ENCODE measurements at regions of chr7 and their contacts with region 1.

Region 1: DNA sequence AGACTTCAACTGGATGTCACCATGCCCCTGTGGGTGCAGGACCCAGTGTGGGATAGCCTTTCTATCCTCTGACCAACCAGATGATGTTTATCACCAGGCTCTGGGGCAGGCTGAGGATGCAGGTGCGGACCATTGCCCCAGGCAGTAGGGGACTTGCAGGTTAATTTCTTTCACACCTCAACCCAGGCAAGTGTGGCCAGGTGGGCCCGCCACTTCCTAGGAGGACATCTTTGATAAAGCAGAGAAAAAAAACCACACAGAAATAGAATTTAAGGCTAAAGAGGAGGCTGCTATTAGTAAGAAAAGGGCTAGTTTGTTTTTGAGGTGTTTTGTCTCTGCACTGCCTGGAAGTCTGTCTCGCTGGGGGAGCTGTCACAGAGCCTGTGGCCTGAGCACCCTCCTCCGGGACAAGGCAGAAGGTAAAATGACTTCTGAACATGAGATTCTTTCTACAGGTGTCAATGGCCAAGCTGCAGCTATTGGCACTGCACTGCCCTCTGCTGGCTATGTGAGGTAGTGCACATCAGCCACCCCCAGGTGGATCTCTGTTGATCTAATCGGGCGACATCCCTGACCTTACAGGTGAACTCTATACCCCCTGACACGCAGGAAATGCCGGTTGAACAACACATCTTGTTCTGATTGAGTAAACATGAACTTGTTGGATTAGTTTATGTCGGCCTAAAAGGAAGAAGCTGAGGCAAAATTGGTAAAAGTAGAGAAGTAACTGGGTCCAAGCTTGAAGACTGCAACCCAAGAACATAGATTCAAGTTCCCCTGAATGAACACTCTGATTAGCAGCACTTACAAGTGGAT is 21.0 kb downstream of the UPP1 start:
- DNase-seq: peak; percentile 81 to 97 (median 89)
- ATAC-seq: peak; percentile 98
- H3K4me3 ChIP-seq: no peak overlapping the region
- H3K4me3 Mint-ChIP-seq: no peak overlapping the region
- H3K27ac ChIP-seq: peak overlapping the region in 1 of 2 experiments; percentile 24
- H3K27ac Mint-ChIP-seq: peak overlapping the region; percentile 69
- H3K4me1 ChIP-seq: peaks cover 11% of the 10 kb centered on the region
- H3K4me1 Mint-ChIP-seq: peaks cover 11% of the 10 kb centered on the region
- H3K27me3 ChIP-seq: no peaks in the 10 kb centered on the region
- H3K27me3 Mint-ChIP-seq: no peaks in the 10 kb centered on the region
- CTCF ChIP-seq: peak; percentile 98

Region 2: GRCh38 chr7:47937711-47938573 is 172.1 kb before region 1 on chr7:
- CTCF ChIA-PET with region 1: interaction called, 14 read pairs
- POLR2A ChIA-PET with region 1: no interaction called
- intact Hi-C with region 1: no loop called
- DNase-seq: peak in 1 of 9 experiments; percentile 37
- ATAC-seq: no peak
- H3K4me3 ChIP-seq: no peak overlapping the region
- H3K4me3 Mint-ChIP-seq: no peak overlapping the region
- H3K27ac ChIP-seq: no peak overlapping the region
- H3K27ac Mint-ChIP-seq: no peak overlapping the region
- H3K4me1 ChIP-seq: no peaks in the 10 kb centered on the region
- H3K4me1 Mint-ChIP-seq: no peaks in the 10 kb centered on the region
- H3K27me3 ChIP-seq: no peaks in the 10 kb centered on the region
- H3K27me3 Mint-ChIP-seq: no peaks in the 10 kb centered on the region
- CTCF ChIP-seq: no peak

Region 3: GRCh38 chr7:47945261-47946001 is 164.6 kb before region 1 on chr7:
- CTCF ChIA-PET with region 1: interaction called, 111 read pairs
- POLR2A ChIA-PET with region 1: no interaction called
- intact Hi-C with region 1: loop called (anchors 1 kb)
- DNase-seq: peak; percentile 42 to 83 (median 71)
- ATAC-seq: no peak
- H3K4me3 ChIP-seq: no peak overlapping the region
- H3K4me3 Mint-ChIP-seq: no peak overlapping the region
- H3K27ac ChIP-seq: no peak overlapping the region
- H3K27ac Mint-ChIP-seq: no peak overlapping the region
- H3K4me1 ChIP-seq: no peaks in the 10 kb centered on the region
- H3K4me1 Mint-ChIP-seq: no peaks in the 10 kb centered on the region
- H3K27me3 ChIP-seq: no peaks in the 10 kb centered on the region
- H3K27me3 Mint-ChIP-seq: no peaks in the 10 kb centered on the region
- CTCF ChIP-seq: peak; percentile 82

Region 4: GRCh38 chr7:47979145-47979831 is 130.8 kb before region 1 on chr7 and contains the start of gene HUS1:
- CTCF ChIA-PET with region 1: interaction called, 20 read pairs
- POLR2A ChIA-PET with region 1: interaction called, 8 read pairs
- intact Hi-C with region 1: loop called in 1 of 2 experiments (anchors 1 kb)
- DNase-seq: peak; percentile 85 to 95 (median 90)
- ATAC-seq: peak; percentile 98
- H3K4me3 ChIP-seq: peak within 1 kb of the TSS; percentile 83 to 86
- H3K4me3 Mint-ChIP-seq: peak within 1 kb of the TSS; percentile 94
- H3K27ac ChIP-seq: peak within 1 kb of the TSS; percentile 93 to 96
- H3K27ac Mint-ChIP-seq: peak within 1 kb of the TSS; percentile 99
- H3K4me1 ChIP-seq: peaks cover 13% of the 10 kb centered on the region
- H3K4me1 Mint-ChIP-seq: peaks cover 26% of the 10 kb centered on the region
- H3K27me3 ChIP-seq: no peaks in the 10 kb centered on the region
- H3K27me3 Mint-ChIP-seq: no peaks in the 10 kb centered on the region
- CTCF ChIP-seq: no peak
- total RNA-seq, gene HUS1: 73.4 to 82.9 TPM

Region 5: GRCh38 chr7:48035301-48035966 is 74.6 kb before region 1 on chr7 and contains the start of gene C7orf57:
- CTCF ChIA-PET with region 1: interaction called, 15 read pairs
- POLR2A ChIA-PET with region 1: no interaction called
- intact Hi-C with region 1: loop called (anchors 1 to 5 kb)
- DNase-seq: peak; percentile 69 to 91 (median 85)
- ATAC-seq: peak; percentile 86
- H3K4me3 ChIP-seq: peak within 1 kb of the TSS; percentile 57 to 73
- H3K4me3 Mint-ChIP-seq: peak within 1 kb of the TSS; percentile 81
- H3K27ac ChIP-seq: peak within 1 kb of the TSS in 1 of 2 experiments; percentile 37
- H3K27ac Mint-ChIP-seq: no peak within 1 kb of the TSS
- H3K4me1 ChIP-seq: peaks cover 8% of the 10 kb centered on the region
- H3K4me1 Mint-ChIP-seq: peaks cover 10% of the 10 kb centered on the region
- H3K27me3 ChIP-seq: peaks cover 8 to 10% of the 10 kb centered on the region in 2 experiments
- H3K27me3 Mint-ChIP-seq: peaks cover 13% of the 10 kb centered on the region
- CTCF ChIP-seq: no peak
- total RNA-seq, gene C7orf57: not detected

Region 6: GRCh38 chr7:48088559-48089045 is 21.5 kb before region 1 on chr7:
- CTCF ChIA-PET with region 1: interaction called, 17 read pairs
- POLR2A ChIA-PET with region 1: interaction called, 4 read pairs
- intact Hi-C with region 1: loop called in 1 of 2 experiments (anchors 1 kb)
- DNase-seq: no peak
- ATAC-seq: no peak
- H3K4me3 ChIP-seq: peak overlapping the region; percentile 87 to 92
- H3K4me3 Mint-ChIP-seq: peak overlapping the region; percentile 89
- H3K27ac ChIP-seq: peak overlapping the region; percentile 85 to 86
- H3K27ac Mint-ChIP-seq: peak overlapping the region; percentile 94
- H3K4me1 ChIP-seq: peaks cover 71% of the 10 kb centered on the region
- H3K4me1 Mint-ChIP-seq: peaks cover 75% of the 10 kb centered on the region
- H3K27me3 ChIP-seq: no peaks in the 10 kb centered on the region
- H3K27me3 Mint-ChIP-seq: no peaks in the 10 kb centered on the region
- CTCF ChIP-seq: no peak

Region 7: DNA sequence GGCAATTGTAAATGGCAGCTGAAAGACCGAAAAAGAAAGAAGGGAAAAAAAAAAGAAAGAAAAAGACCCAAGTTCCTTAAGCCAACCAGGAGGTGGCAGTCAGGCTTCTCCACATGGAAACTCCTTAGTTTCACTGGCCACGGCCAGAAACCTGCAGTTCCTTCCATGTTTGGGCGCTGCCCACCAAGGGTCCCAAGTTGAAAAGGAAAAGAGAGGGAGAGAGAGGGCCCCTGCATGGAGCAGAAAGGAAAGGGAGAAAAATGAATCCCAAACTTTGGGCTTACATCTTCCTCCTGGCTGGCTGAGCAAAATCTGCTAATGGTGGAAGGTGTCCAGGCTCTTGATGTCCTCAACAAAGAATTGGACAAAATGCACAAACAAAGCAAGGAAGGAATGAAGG is 29.4 kb after region 1 on chr7:
- CTCF ChIA-PET with region 1: no interaction called
- POLR2A ChIA-PET with region 1: no interaction called
- intact Hi-C with region 1: no loop called
- DNase-seq: no peak
- ATAC-seq: no peak
- H3K4me3 ChIP-seq: no peak overlapping the region
- H3K4me3 Mint-ChIP-seq: no peak overlapping the region
- H3K27ac ChIP-seq: no peak overlapping the region
- H3K27ac Mint-ChIP-seq: no peak overlapping the region
- H3K4me1 ChIP-seq: no peaks in the 10 kb centered on the region
- H3K4me1 Mint-ChIP-seq: peaks cover 2% of the 10 kb centered on the region
- H3K27me3 ChIP-seq: no peaks in the 10 kb centered on the region
- H3K27me3 Mint-ChIP-seq: peaks cover 2% of the 10 kb centered on the region
- CTCF ChIP-seq: no peak

Region 8: GRCh38 chr7:48154792-48155413 is 44.8 kb after region 1 on chr7:
- CTCF ChIA-PET with region 1: no interaction called
- POLR2A ChIA-PET with region 1: interaction called, 4 read pairs
- intact Hi-C with region 1: loop called in 1 of 2 experiments (anchors 2 kb)
- DNase-seq: peak in 5 of 9 experiments; percentile 7 to 49 (median 33)
- ATAC-seq: no peak
- H3K4me3 ChIP-seq: no peak overlapping the region
- H3K4me3 Mint-ChIP-seq: no peak overlapping the region
- H3K27ac ChIP-seq: no peak overlapping the region
- H3K27ac Mint-ChIP-seq: no peak overlapping the region
- H3K4me1 ChIP-seq: no peaks in the 10 kb centered on the region
- H3K4me1 Mint-ChIP-seq: no peaks in the 10 kb centered on the region
- H3K27me3 ChIP-seq: peaks cover 0 to 4% of the 10 kb centered on the region in 2 experiments
- H3K27me3 Mint-ChIP-seq: peaks cover 7% of the 10 kb centered on the region
- CTCF ChIP-seq: no peak

Region 9: DNA sequence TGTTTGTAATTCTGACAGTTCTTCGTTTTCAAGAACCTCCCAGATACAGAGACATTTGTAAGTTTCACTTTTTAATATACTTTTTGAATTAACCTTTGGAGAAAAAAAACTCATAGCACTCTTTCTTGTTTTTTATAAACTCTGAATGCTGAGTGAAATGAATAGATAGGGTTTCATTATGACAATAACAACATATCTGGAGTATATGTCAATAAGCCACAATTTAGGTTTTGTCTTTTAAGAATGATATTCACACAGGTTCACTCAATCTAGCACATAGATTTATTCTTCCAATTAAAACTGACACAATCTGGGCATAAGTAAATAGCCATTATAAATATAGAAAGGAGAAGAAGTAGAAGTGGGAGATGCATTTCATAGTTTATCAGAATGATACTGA is 82.9 kb after region 1 on chr7:
- CTCF ChIA-PET with region 1: no interaction called
- POLR2A ChIA-PET with region 1: no interaction called
- intact Hi-C with region 1: no loop called
- DNase-seq: no peak
- ATAC-seq: no peak
- H3K4me3 ChIP-seq: no peak overlapping the region
- H3K4me3 Mint-ChIP-seq: no peak overlapping the region
- H3K27ac ChIP-seq: no peak overlapping the region
- H3K27ac Mint-ChIP-seq: no peak overlapping the region
- H3K4me1 ChIP-seq: no peaks in the 10 kb centered on the region
- H3K4me1 Mint-ChIP-seq: no peaks in the 10 kb centered on the region
- H3K27me3 ChIP-seq: no peaks in the 10 kb centered on the region
- H3K27me3 Mint-ChIP-seq: peaks cover 8% of the 10 kb centered on the region
- CTCF ChIP-seq: no peak

Region 10: DNA sequence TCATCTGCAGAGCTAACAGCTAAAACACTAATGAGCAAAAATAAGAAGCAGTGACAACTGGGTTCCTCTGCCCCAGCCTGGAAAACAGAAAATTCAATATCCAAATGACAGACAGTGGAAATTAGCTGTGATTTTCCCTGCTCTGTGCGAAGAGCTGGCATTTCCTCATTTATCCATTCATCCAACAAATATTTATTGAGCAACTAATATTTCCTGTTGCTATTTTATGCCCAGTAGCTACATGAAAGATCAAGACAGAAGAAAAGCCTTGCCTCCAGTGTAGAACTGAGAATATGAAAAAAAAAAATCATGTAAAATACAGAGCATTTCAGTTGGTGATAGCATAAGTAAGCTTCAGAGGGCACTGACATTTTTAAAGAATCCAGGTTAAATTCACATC is 202.1 kb after region 1 on chr7:
- CTCF ChIA-PET with region 1: no interaction called
- POLR2A ChIA-PET with region 1: no interaction called
- intact Hi-C with region 1: no loop called
- DNase-seq: no peak
- ATAC-seq: no peak
- H3K4me3 ChIP-seq: no peak overlapping the region
- H3K4me3 Mint-ChIP-seq: no peak overlapping the region
- H3K27ac ChIP-seq: no peak overlapping the region
- H3K27ac Mint-ChIP-seq: no peak overlapping the region
- H3K4me1 ChIP-seq: no peaks in the 10 kb centered on the region
- H3K4me1 Mint-ChIP-seq: no peaks in the 10 kb centered on the region
- H3K27me3 ChIP-seq: no peaks in the 10 kb centered on the region
- H3K27me3 Mint-ChIP-seq: no peaks in the 10 kb centered on the region
- CTCF ChIP-seq: no peak